ENCODE measurements at regions of chr1 and their contacts with region 1.

Region 1: DNA sequence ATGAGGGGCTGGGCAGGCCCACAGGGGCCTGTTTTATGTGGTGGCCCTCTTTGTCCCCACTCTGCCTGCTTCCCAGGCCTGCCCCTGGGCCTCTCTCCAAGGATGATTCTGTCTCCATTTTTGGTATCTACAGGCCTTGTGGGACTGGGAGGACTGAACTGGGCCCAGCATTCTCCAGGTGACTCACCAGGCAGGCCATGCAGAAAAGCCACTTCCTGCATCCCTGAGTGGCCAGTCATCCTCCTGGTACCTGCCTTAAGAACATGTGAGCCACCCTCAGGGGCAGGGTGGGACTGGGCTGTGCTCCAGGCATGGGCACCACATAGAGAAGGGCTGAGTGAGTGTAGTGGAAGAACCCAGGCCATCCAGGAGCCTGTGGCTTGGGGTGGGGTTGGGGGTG is 20.0 kb upstream of the BCAR3 start:
- DNase-seq: peak; percentile 99
- ATAC-seq: peak; percentile 74
- H3K4me3 ChIP-seq: no peak overlapping the region
- H3K27ac ChIP-seq: peak overlapping the region; percentile 99
- H3K4me1 ChIP-seq: peaks cover 59% of the 10 kb centered on the region
- H3K27me3 ChIP-seq: no peaks in the 10 kb centered on the region
- CTCF ChIP-seq: no peak

Region 2: DNA sequence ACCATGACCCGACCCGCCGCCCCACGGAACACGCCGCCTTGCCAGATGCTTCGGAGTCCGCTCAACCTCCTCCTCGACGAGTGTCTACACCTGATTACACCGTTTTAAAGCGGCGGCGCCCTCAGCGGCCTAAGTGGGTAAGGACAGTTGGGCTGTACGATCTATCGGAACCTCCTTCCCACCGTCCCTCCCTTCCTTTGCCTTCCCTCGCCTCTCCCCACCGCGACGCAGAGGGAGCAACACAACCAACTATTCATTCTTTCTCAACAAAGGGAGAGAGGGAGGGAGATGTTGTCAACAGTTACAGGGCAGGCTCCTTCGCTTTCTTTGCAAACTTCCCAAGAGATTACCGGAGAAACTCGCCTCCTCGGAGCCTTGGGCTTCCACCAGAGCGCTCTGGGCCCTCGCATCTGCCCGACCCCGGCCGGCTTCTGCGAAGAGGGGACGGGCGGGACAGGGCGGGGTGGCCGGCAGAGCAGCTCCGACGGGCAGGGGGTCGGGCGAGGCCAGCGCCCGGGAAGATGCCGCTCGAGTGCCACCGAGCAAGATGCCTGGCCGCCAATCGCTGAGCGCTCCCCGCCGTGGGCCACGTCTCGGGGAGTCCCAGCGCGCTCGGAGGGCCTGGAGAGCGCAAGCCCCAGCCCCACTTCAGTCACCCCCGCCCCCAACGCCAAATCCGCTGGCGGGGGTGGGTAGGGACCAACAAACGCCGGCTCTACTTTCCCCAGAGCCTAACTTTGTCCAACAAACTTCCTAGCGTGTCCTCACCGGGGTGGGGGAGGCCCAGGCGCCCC is 20.7 kb before region 1 on chr1:
- CTCF ChIA-PET with region 1: no interaction called
- POLR2A ChIA-PET with region 1: interaction called, 6 read pairs
- intact Hi-C with region 1: loop called (anchors 1 kb)
- DNase-seq: peak; percentile 82
- ATAC-seq: peak; percentile 34
- H3K4me3 ChIP-seq: peak overlapping the region; percentile 95
- H3K27ac ChIP-seq: peak overlapping the region; percentile 99
- H3K4me1 ChIP-seq: peaks cover 78% of the 10 kb centered on the region
- H3K27me3 ChIP-seq: no peaks in the 10 kb centered on the region
- CTCF ChIP-seq: peak; percentile 61

Region 3: DNA sequence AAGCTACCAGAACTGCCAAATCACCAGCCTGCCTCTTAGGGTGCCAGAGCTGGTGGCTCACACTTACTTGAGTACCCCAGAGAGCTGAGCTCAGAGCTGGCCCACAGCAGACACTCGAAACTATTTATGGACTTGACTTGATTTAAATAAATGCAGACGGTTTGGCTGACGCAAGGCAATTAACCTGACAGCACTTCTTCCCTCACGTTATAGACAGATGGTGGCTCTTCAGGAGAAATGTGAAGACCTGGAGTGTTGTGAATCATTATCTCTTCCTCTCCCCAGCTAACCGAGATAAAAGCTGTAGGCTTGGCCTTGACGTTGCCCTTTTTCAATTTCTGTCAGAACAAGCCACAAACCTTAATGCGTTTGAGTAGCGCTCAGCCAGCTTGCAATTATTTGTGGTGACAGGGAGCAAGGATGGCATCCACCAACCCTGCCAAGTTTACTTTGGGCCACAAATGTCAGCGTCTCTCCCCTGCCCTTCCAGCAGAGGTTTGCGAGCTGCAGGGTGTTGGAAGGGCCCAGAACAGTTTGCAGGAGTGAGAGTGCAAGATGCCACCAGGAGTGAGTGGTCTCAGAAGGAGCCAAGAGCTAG is 14.0 kb after region 1 on chr1:
- CTCF ChIA-PET with region 1: no interaction called
- POLR2A ChIA-PET with region 1: interaction called, 4 read pairs
- intact Hi-C with region 1: loop called (anchors 1 kb)
- DNase-seq: no peak
- ATAC-seq: no peak
- H3K4me3 ChIP-seq: no peak overlapping the region
- H3K27ac ChIP-seq: peak overlapping the region; percentile 20; the same call in 1 of the 2 replicates
- H3K4me1 ChIP-seq: peaks cover 24% of the 10 kb centered on the region
- H3K27me3 ChIP-seq: no peaks in the 10 kb centered on the region
- CTCF ChIP-seq: no peak

Region 4: DNA sequence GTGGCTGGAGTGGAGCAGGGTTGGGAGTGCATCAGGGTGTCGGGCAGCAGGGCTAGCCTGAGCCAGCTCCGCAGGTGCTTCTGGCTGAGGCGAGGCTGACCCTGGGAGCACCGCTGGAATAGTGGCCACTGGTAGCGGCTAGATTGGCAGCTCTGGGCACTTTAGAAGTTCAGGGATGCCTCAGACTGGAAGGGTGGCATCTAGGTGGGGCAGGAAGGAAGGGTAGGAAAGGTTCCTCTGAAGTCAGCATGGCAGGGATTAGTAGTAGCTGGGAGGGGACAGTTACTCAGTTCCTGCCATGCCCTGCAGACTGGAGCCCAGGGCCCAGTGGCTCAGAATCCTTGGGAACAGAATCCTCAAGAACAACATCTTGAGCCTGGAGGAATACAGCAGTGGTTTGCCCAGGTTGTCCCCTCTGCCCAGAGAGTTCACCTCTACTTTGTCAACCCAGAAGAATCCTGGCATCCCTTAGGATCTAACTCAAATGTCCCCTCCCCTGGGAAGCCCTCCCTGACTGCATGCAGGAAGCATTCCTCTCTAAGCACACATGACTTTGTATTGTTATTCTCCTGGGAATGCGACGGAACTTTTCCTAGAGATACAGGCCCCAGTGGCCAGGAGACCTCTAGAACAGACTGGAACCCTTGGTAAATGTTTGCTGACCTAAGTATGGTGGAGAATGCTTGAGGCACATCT is 19.5 kb after region 1 on chr1:
- CTCF ChIA-PET with region 1: no interaction called
- POLR2A ChIA-PET with region 1: interaction called, 4 read pairs
- intact Hi-C with region 1: loop called (anchors 1 kb)
- DNase-seq: peak; percentile 83
- ATAC-seq: peak; percentile 87
- H3K4me3 ChIP-seq: no peak overlapping the region
- H3K27ac ChIP-seq: peak overlapping the region; percentile 94
- H3K4me1 ChIP-seq: peaks cover 41% of the 10 kb centered on the region
- H3K27me3 ChIP-seq: no peaks in the 10 kb centered on the region
- CTCF ChIP-seq: no peak

Region 5: GRCh38 chr1:93874025-93874651 is 172.5 kb after region 1 on chr1:
- CTCF ChIA-PET with region 1: no interaction called
- POLR2A ChIA-PET with region 1: no interaction called
- intact Hi-C with region 1: no loop called
- DNase-seq: peak; percentile 84
- ATAC-seq: peak; percentile 81
- H3K4me3 ChIP-seq: no peak overlapping the region
- H3K27ac ChIP-seq: 0 out of 2 replicates have a peak overlapping the region, but pooled peaks have one; percentile 16
- H3K4me1 ChIP-seq: peaks cover 26% of the 10 kb centered on the region
- H3K27me3 ChIP-seq: no peaks in the 10 kb centered on the region
- CTCF ChIP-seq: peak; percentile 92